Activated naive CD4-positive, alpha-beta T cell treated with anti-CD3 and anti-CD28 coated beads for 36 hours (primary cell): ENCODE measurements at regions of chr5 and their contacts with region 1.

Region 1: DNA sequence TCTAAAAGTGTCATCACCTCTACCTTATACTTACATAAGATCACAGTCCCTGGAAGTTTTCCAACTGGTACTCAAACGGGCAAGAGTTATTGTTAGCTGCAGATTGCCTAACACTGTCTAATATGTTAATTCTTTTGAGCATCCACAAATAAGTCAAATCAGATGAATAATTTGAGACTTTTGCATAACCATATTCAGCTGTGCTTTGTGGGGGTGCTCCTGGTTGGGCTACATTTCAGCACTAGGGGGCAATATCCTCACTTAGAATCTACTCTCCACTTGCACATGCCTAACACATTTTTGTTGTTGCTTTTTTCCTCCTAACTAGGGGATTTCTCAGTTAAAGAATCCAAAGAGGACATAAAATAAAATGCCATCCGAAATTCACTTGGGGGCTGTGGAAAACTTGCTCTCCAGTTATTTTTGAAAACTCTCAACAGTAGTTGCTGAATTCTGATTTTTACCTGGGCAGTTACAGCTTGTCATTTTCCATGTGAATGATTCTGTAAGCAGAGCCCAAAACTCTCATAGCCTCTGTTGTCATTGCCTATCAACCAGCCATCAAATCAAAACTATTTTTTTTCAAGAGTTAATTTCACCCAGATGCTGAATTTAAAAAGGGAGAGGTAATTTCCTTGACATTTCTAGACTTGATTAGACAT is 71.5 kb downstream of the TRIM36 start:
- DNase-seq: peak; percentile 39
- H3K4me3 Mint-ChIP-seq: no peak overlapping the region
- H3K27ac Mint-ChIP-seq: no peak overlapping the region
- H3K4me1 Mint-ChIP-seq: no peaks in the 10 kb centered on the region
- H3K27me3 Mint-ChIP-seq: peaks cover 7% of the 10 kb centered on the region

Region 2: DNA sequence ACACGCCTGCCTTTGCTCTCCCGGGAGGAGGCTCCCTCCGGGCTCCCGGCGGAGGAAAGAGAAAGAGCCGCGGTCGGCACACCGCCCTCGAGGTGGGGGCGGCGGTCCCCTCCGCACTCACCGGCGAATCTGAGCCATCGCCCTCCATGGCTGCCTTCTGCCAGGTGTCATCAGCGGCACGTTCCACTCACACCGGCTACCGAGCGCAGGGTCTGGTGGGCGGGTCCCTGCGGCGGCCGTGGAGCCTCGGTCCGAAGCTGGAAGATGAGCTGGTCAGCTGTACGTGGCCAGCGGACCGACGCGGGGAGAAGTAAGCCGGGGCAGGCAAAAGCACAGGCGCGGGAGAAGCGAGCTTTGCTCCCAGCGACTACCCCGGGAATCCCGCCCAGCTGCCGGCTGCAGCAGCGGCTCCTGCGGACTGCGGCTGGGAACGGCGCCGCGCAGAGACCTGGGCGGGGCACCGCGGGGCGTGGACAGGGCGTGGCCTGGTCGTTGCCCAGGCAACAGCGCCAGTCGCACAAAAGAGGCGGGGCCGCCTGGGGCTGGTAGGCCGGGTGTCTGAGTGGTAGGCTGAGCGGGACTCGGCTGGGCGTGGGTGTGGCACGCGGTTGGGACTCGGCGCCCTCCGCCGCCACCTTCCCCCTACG is 71.4 kb after region 1 on chr5 and contains the start of gene TRIM36:
- CTCF ChIA-PET with region 1: interaction called, 3 read pairs
- intact Hi-C with region 1: loop called (anchors 2 kb)
- DNase-seq: peak; percentile 93
- H3K4me3 Mint-ChIP-seq: peak within 1 kb of the TSS; percentile 82
- H3K27ac Mint-ChIP-seq: no peak within 1 kb of the TSS
- H3K4me1 Mint-ChIP-seq: peaks cover 12% of the 10 kb centered on the region
- H3K27me3 Mint-ChIP-seq: peaks cover 66% of the 10 kb centered on the region
- total RNA-seq, gene TRIM36: 0.17 TPM in 1 of 2 experiments, not detected in the other

Region 3: GRCh38 chr5:115296124-115297022 is 198.2 kb after region 1 on chr5 and contains the start of gene CCDC112:
- CTCF ChIA-PET with region 1: no interaction called
- intact Hi-C with region 1: loop called (anchors 5 kb)
- DNase-seq: peak; percentile 85
- H3K4me3 Mint-ChIP-seq: peak within 1 kb of the TSS; percentile 80
- H3K27ac Mint-ChIP-seq: no peak within 1 kb of the TSS
- H3K4me1 Mint-ChIP-seq: peaks cover 4% of the 10 kb centered on the region
- H3K27me3 Mint-ChIP-seq: peaks cover 3% of the 10 kb centered on the region
- total RNA-seq, gene CCDC112: 1.9 to 2.1 TPM

Region 4: DNA sequence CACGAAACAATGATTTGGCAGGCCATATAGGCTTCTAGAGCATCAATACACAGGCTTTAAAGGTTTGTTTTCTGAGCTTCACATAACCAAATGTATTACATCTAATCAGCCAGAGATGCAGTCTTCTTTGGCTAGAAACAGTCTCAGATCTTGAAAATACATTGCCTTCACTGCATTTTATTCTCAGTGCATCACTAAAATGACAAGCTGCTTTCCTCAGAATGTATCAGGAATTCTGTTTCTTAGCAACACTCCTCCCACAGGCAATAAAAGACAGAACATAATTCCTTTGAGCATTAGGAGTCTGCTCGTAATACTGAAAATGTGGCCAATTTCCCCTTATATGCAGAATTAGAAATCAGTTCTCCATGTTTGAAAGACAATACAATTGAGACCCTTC is 409.5 kb after region 1 on chr5:
- CTCF ChIA-PET with region 1: no interaction called
- intact Hi-C with region 1: no loop called
- DNase-seq: no peak
- H3K4me3 Mint-ChIP-seq: no peak overlapping the region
- H3K27ac Mint-ChIP-seq: no peak overlapping the region
- H3K4me1 Mint-ChIP-seq: no peaks in the 10 kb centered on the region
- H3K27me3 Mint-ChIP-seq: peaks cover under 1% of the 10 kb centered on the region

Region 5: GRCh38 chr5:115544436-115545350 is 446.5 kb after region 1 on chr5 and contains the start of gene FEM1C:
- CTCF ChIA-PET with region 1: no interaction called
- intact Hi-C with region 1: no loop called
- DNase-seq: peak; percentile 98
- H3K4me3 Mint-ChIP-seq: peak within 1 kb of the TSS; percentile 95
- H3K27ac Mint-ChIP-seq: peak within 1 kb of the TSS; percentile 99
- H3K4me1 Mint-ChIP-seq: peaks cover 40% of the 10 kb centered on the region
- H3K27me3 Mint-ChIP-seq: no peaks in the 10 kb centered on the region
- total RNA-seq, gene FEM1C: 9.7 to 10.0 TPM

Region 6: GRCh38 chr5:115586601-115587048 is 488.5 kb after region 1 on chr5:
- CTCF ChIA-PET with region 1: no interaction called
- intact Hi-C with region 1: loop called (anchors 1 kb)
- DNase-seq: no peak
- H3K4me3 Mint-ChIP-seq: no peak overlapping the region
- H3K27ac Mint-ChIP-seq: no peak overlapping the region
- H3K4me1 Mint-ChIP-seq: no peaks in the 10 kb centered on the region
- H3K27me3 Mint-ChIP-seq: no peaks in the 10 kb centered on the region

Region 7: DNA sequence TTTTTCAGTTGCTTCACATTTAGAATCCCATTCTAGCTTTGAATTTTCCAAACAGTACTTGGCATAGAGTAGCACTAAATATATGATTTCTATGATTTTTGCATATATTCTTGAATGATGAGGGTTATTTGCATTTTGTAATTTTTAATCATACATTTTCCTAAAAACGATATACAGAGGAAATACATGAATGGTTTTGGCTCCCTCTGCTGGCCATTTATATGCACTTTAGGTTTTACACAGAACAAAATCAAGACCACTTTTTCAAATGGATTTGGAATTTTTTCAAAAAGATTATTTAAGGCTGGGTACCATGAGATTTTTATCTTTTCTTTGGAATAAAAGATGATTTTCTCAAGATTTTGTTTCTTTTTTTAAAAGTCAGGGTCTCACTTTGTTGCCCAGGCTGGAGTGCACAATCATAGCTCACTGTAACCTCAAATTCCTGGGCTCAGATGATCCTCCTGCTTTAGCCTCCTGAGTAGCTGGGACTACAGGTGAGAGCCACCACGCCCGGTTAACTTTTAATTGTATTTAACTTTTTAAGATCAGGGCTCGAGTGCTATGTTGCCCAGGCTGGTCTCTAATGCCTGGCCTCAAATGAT is 970.0 kb after region 1 on chr5:
- CTCF ChIA-PET with region 1: no interaction called
- intact Hi-C with region 1: loop called (anchors 1 kb)
- DNase-seq: peak; percentile 55
- H3K4me3 Mint-ChIP-seq: no peak overlapping the region
- H3K27ac Mint-ChIP-seq: no peak overlapping the region
- H3K4me1 Mint-ChIP-seq: no peaks in the 10 kb centered on the region
- H3K27me3 Mint-ChIP-seq: peaks cover 22% of the 10 kb centered on the region